Activated B cell treated with CpG ODN at 0.5 μM for 24 hours (primary cell): ENCODE measurements at regions of chr1 and their contacts with region 1.

Region 1: GRCh38 chr1:97849345-97850340 is 71.2 kb downstream of the DPYD start:
- DNase-seq: no peak
- ATAC-seq: peak; percentile 26
- H3K4me3 Mint-ChIP-seq: peak overlapping the region; percentile 26
- H3K27ac Mint-ChIP-seq: peak overlapping the region; percentile 54
- H3K4me1 Mint-ChIP-seq: peaks cover 22% of the 10 kb centered on the region
- H3K27me3 Mint-ChIP-seq: no peaks in the 10 kb centered on the region
- CTCF ChIP-seq: no peak

Region 2: DNA sequence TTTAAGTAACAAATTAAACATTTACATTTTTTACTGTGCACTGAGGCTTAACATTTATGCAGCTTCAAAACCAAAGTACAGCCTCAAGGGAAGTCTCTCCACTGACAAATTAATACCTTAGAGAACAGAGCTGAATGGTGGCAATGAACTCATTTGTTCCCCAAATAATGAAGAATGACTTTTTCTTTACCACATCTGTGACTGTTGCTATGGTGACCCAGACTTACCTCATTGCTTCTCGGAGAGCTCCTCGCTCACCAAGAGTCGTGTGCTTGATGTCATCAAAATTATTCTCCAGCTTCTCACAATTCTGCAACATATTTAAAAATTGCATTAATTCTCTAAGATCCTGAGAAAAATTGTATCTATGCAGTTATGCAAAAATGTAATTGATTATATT is 21.8 kb before region 1 on chr1:
- CTCF ChIA-PET with region 1: no interaction called
- POLR2A ChIA-PET with region 1: no interaction called
- intact Hi-C with region 1: loop called (anchors 2 kb)
- DNase-seq: no peak
- ATAC-seq: peak; percentile 80
- H3K4me3 Mint-ChIP-seq: no peak overlapping the region
- H3K27ac Mint-ChIP-seq: no peak overlapping the region
- H3K4me1 Mint-ChIP-seq: peaks cover 6% of the 10 kb centered on the region
- H3K27me3 Mint-ChIP-seq: no peaks in the 10 kb centered on the region
- CTCF ChIP-seq: no peak

Region 3: GRCh38 chr1:97920832-97921571 is 71.4 kb after region 1 on chr1 and contains the start of gene DPYD:
- CTCF ChIA-PET with region 1: no interaction called
- POLR2A ChIA-PET with region 1: interaction called, 19 read pairs
- intact Hi-C with region 1: loop called (anchors 1 kb)
- DNase-seq: peak; percentile 80
- ATAC-seq: peak; percentile 89
- H3K4me3 Mint-ChIP-seq: peak within 1 kb of the TSS; percentile 93
- H3K27ac Mint-ChIP-seq: peak within 1 kb of the TSS; percentile 89
- H3K4me1 Mint-ChIP-seq: peaks cover 22% of the 10 kb centered on the region
- H3K27me3 Mint-ChIP-seq: no peaks in the 10 kb centered on the region
- CTCF ChIP-seq: no peak
- total RNA-seq, gene DPYD: 10.3 and 12.6 TPM in 2 replicates